Breast epithelium (tissue), 4 donors: ENCODE measurements at regions of chr17 and their contacts with region 1.

Region 1: GRCh38 chr17:72120642-72121163 is at the start of gene SOX9:
- DNase-seq: peak; percentile 91 to 97
- H3K4me3 ChIP-seq: peak within 1 kb of the TSS; percentile 53 to 85 (median 73)
- H3K27ac ChIP-seq: peak within 1 kb of the TSS; percentile 87 to 93
- H3K4me1 ChIP-seq: no peaks in the 10 kb centered on the region
- H3K27me3 ChIP-seq: peaks cover 0 to 20% of the 10 kb centered on the region in 2 donors
- CTCF ChIP-seq: no peak
- POLR2A ChIP-seq: peak; percentile 94
- total RNA-seq, gene SOX9: 3.0 to 47.7 (median 15.7) TPM

Region 2: GRCh38 chr17:71792966-71793365 is 327.7 kb before region 1 on chr17:
- intact Hi-C with region 1: loop called (anchors 10 kb)
- DNase-seq: no peak
- H3K4me3 ChIP-seq: no peak overlapping the region
- H3K27ac ChIP-seq: no peak overlapping the region
- H3K4me1 ChIP-seq: no peaks in the 10 kb centered on the region
- H3K27me3 ChIP-seq: peaks cover 0 to 5% of the 10 kb centered on the region in 2 donors
- CTCF ChIP-seq: no peak
- POLR2A ChIP-seq: no peak

Region 3: DNA sequence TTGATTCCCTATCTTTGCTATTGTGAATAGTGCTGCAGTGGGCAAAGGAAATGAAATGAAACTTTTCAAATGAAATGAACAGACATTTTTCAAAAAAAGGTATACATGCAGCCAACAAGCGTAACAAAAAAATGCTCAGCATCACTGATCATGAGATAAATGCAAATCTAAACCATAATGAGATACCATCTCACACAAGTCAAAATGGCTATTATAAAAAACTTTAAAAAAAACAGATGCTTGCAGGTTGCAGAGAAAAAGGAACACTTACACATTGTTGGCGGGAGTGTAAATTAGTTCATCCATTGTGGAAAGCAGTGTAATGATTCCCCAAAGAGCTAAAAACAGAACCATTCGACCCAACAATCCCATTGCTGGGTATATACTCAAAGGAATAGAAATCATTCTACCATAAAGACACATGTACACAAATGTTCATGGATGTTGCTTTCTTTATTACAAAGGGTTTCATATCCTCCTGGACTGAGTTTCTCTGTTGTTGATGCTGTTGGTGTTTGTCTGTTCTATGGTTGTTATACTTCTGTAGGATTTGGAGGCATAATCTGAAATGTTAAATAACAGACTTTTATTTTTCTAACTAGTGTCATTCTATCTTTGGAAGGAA is 99.2 kb before region 1 on chr17:
- intact Hi-C with region 1: no loop called
- DNase-seq: no peak
- H3K4me3 ChIP-seq: no peak overlapping the region
- H3K27ac ChIP-seq: no peak overlapping the region
- H3K4me1 ChIP-seq: no peaks in the 10 kb centered on the region
- H3K27me3 ChIP-seq: no peaks in the 10 kb centered on the region
- CTCF ChIP-seq: no peak
- POLR2A ChIP-seq: no peak

Region 4: DNA sequence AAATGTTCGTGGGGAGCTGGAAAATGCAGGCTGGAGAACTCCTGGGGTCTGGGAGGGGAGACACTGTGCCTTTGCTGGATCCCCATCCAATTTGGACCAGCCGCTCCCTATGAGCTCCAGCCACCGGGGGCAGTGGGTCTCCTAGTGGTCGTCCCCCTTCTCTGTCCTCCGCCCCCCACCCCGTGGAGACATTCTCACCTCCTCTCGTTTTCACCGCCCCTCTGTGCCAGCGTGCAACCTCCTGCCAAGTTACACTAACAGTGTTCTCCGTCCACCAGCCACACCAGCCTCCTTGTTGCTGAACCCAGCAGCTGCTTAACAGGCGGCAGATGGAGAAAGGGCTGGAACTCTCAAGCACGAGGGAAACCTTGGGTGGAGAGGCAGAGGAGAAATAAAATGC is 67.3 kb before region 1 on chr17:
- intact Hi-C with region 1: loop called (anchors 2 kb)
- DNase-seq: no peak
- H3K4me3 ChIP-seq: peak overlapping the region in 2 of 3 donors; percentile 56 to 57
- H3K27ac ChIP-seq: peak overlapping the region; percentile 82 to 86
- H3K4me1 ChIP-seq: no peaks in the 10 kb centered on the region
- H3K27me3 ChIP-seq: no peaks in the 10 kb centered on the region
- CTCF ChIP-seq: no peak
- POLR2A ChIP-seq: no peak